ENCODE measurements at regions of chr11 and their contacts with region 1.

Region 1: GRCh38 chr11:101860696-101861427 is 53.9 kb upstream of the CEP126 start:
- DNase-seq: peak; percentile 47 to 85
- H3K4me3 ChIP-seq: no peak overlapping the region
- CTCF ChIP-seq: peak in 1 of 3 donors; percentile 22
- POLR2A ChIP-seq: no peak

Region 2: DNA sequence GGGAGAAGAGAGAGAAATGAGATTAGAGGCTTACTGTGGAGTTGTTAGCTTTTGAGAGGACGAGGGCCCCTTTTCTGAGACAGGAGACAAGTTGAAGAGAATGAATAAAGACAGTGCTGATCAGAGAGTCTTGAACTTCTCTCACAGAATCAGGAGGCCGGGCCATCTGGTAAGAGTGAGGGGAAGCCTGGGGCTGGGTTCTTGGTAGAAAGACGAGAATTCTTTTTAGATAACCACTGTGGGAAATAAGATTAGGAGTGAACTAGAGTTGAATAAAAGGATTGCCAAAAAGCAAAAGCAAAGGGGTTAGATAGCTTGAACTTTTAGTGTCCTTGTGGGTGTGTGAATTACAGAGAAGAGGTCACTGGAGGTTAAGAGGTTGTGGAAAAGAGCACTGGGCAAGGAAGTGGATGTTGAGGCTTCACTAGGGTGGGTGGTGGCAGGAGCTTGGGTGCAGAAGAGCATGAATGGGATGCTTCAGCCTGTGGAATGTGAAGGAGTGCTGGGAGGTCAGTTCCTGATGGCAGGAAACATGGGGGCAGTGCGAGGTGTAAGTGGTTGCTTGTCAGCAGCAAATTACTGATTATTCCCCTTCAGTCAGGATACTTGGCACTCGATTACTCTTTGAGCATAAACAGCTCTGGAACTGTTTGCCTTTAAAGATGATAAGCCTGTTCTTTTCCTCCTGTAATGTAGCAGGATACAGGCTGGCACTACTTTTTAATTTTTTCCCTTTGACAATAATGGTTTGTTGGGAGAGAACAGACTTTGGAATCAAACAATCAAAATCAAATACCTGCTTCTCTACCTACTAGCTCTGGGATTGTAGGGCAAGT is 1075.5 kb before region 1 on chr11:
- intact Hi-C with region 1: no loop called
- DNase-seq: no peak
- H3K4me3 ChIP-seq: no peak overlapping the region
- CTCF ChIP-seq: no peak
- POLR2A ChIP-seq: no peak

Region 3: DNA sequence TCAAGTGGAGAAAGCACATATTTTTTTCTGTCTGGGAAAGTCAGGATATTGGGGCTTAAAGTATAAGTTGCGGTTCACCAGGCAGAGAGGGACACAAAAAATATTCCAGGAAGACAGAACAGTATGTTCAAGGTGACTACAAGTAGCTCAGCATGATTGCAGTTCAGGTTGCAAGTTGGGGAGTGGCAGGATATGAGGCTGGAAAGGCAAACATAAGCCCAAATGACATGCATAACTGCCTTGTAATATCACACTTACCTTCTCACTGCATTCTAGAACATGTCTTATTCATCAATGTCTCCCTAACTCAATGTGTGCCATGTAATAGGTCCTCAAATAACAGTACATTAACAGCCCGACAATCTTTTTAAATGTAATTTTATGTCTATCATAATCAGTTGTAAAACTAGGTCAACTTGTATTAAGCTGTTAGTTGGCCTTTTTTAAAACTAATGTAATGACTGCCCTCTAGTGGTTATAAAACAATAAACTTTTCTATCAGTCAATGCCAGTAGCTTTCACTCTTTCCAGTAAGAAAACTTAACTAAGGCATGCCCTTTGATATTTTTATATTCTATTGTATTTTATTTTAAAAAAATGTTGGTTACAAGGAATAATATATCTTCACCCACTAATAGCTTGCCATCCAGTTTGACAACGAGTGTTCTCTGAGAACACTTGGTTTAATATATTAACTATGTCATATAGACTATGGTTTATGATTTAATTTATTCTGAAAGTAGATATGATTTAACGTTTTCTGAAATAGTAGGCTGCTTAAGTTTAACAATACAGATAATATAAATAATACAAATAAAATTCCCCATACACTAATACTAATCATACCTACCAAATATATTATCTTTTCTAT is 146.9 kb after region 1 on chr11:
- intact Hi-C with region 1: loop called (anchors 5 kb)
- DNase-seq: no peak
- H3K4me3 ChIP-seq: no peak overlapping the region
- CTCF ChIP-seq: no peak
- POLR2A ChIP-seq: no peak

Measured in lower leg skin (tissue), 4 donors.